Psoas muscle (tissue), 8 donors: ENCODE measurements at regions of chr15 and their contacts with region 1.

Region 1: DNA sequence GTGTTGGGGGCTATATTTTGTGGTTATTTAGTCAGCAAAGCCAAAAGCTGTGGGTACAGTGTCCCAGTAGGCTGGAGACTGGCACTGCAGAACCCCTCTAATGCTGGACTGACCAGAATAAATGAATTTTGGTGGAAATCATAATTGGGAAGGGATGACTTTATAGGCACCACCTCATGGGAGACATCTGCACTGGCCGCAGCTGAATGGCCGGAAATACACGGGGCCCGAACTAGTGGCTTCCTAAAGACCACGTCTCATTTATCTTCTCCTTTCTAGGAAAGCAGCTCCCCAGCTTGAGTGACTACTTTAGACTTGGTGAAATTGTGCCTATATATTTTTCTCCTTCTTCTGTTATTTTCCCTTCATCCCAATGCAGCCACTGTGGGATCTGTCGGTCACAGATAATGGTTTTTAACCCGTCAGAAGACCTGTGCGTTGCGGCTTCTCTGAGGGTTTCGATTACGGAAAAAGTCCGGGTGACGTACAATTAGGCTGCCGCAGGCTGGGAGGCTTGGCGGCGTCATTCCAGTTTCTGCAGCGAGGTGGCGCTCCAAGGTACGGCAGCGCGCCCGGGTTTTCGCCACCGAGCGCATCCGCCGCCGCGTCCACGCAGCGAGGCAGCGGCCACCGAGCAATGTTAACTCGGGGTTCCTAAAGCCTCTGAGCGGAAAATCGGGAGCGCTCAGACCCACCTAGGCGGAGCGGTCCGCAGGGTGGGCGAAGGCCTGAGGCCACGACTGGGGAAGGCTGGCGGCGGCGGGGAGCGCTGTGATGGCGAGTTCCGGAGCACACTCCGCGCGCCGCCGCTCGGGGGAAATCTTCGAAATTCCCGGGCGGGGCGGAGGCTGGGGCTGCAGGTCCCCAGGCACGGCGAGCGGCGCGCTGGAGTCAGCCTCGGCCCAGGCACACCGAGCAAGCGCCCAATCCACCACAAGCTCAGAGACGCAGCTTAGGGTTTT is 26.3 kb downstream of the NR2F2 start:
- DNase-seq: peak; percentile 80 to 87
- ATAC-seq: peak; percentile 70 to 88 (median 82)
- H3K4me3 ChIP-seq: peak overlapping the region; percentile 68
- H3K27ac ChIP-seq: peak overlapping the region; percentile 19
- H3K4me1 ChIP-seq: peaks cover 3% of the 10 kb centered on the region
- H3K27me3 ChIP-seq: peaks cover 4 to 78% (median 28%) of the 10 kb centered on the region in 3 donors
- CTCF ChIP-seq: peak; percentile 99

Region 2: GRCh38 chr15:96409215-96410138 is 52.7 kb after region 1 on chr15:
- intact Hi-C with region 1: loop called in 1 of 2 experiments (anchors 5 kb)
- DNase-seq: no peak
- ATAC-seq: peak in 1 of 4 donors; percentile 24
- H3K4me3 ChIP-seq: peak overlapping the region; percentile 60
- H3K27ac ChIP-seq: no peak overlapping the region
- H3K4me1 ChIP-seq: peaks cover 6% of the 10 kb centered on the region
- H3K27me3 ChIP-seq: peaks cover 14 to 92% (median 27%) of the 10 kb centered on the region in 3 donors
- CTCF ChIP-seq: no peak

Region 3: DNA sequence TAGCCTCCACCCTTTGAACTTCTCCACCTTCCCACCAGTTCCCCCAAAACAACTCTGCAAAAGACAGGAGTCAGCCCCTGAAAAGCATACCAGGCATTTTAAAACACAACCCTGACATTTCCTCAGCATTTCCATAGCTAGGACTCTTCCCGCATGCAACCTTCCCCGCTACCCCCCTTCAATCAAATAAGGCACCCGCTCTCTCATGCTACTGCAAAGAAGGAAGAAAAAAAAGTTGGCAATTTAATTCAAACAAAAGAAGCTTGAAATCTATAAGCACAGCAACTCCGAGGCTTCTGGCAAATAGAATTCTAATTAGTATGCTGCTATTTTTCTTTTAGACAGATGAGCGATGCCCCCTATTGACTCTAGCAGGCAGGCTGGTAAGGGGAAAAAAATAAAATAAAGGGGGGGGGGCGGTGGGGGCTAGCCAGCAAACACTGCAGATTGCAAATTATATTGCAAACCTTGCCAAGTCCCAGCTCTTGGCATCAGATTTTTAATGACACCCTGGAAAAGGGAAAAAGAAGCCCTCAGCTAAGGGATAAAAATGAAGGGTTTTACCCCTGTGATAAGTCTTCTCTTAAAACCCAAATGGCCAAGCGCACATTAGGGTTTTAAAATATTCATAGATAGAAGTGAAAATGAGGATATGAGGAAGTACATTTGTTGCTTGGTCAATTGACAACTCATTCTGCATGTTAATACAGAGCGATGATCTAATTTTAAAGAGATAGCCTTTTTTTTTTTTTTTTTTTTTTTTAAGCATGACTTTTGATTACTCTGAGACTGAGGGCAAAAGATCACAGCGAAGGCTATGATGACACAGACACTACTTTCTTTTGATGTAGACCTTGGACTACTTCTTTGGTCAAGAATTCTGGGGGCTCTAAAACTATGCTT is 229.0 kb after region 1 on chr15:
- intact Hi-C with region 1: loop called (anchors 2 to 5 kb)
- DNase-seq: no peak
- ATAC-seq: no peak
- H3K4me3 ChIP-seq: no peak overlapping the region
- H3K27ac ChIP-seq: no peak overlapping the region
- H3K4me1 ChIP-seq: no peaks in the 10 kb centered on the region
- H3K27me3 ChIP-seq: no peaks in the 10 kb centered on the region
- CTCF ChIP-seq: peak; percentile 22

Region 4: GRCh38 chr15:96701443-96701842 is 344.7 kb after region 1 on chr15:
- intact Hi-C with region 1: loop called in 1 of 2 experiments (anchors 10 kb)
- DNase-seq: no peak
- ATAC-seq: no peak
- H3K4me3 ChIP-seq: no peak overlapping the region
- H3K27ac ChIP-seq: no peak overlapping the region
- H3K4me1 ChIP-seq: no peaks in the 10 kb centered on the region
- H3K27me3 ChIP-seq: peaks cover 0 to 17% (median 2%) of the 10 kb centered on the region in 3 donors
- CTCF ChIP-seq: no peak

Region 5: DNA sequence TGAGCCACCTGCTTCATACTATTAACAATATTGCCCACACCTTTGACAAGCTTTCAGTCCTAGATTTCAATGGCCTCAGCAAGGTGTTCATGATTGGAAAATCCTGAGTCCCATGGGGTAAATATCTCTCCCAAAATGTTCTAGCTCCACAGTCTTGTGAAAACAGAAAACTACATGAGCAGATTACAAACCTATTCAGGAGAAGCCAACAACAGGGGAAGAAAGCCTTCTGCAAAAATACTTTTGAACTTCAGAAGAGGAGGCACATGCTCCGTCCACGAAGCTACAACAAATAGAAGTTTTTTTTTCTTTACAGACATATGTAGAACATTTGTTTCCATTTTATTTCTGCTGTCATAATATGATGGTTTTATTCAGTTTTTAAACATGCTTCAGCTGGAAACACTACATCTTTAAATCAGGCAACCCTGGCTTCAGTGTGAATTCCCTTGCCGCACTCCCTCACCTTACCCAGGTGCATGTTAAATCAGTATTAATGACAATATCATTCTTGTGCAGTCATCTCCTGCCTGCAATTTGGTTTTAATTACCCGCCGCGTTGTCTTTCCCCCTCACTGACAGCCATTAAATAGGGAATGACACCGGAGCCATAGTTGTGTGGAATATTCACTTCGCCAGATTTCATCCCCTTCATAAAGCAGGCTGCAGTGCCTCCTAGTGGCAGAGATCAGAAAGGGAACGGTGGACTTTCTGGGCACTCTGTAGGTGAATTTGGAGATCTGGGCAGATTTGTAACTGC is 878.3 kb after region 1 on chr15:
- intact Hi-C with region 1: loop called (anchors 10 kb)
- DNase-seq: no peak
- ATAC-seq: peak in 3 of 4 donors; percentile 30 to 60 (median 38)
- H3K4me3 ChIP-seq: no peak overlapping the region
- H3K27ac ChIP-seq: no peak overlapping the region
- H3K4me1 ChIP-seq: no peaks in the 10 kb centered on the region
- H3K27me3 ChIP-seq: peaks cover 0 to 5% (median 0%) of the 10 kb centered on the region in 3 donors
- CTCF ChIP-seq: peak; percentile 75

Region 6: DNA sequence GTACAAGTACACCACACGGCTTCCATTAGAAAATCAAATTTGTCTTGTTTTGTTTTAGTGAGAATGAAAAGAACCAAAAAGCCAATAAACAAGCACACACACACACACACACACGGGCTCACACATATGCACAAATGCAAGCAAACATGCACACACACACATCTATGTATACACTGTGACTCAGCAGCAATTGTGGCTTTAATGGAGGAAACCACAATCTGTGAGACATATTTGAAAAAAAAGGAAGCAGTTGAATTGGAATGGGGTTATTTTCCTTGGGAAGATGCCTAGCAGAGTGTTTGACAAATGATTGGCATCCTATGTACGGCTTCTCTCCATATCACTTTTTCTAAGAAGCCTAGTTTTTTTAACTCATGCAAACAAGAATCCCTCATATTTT is 1402.6 kb after region 1 on chr15:
- intact Hi-C with region 1: loop called (anchors 10 kb)
- DNase-seq: no peak
- ATAC-seq: no peak
- H3K4me3 ChIP-seq: no peak overlapping the region
- H3K27ac ChIP-seq: no peak overlapping the region
- H3K4me1 ChIP-seq: no peaks in the 10 kb centered on the region
- H3K27me3 ChIP-seq: peaks cover 0 to 2% (median 0%) of the 10 kb centered on the region in 3 donors
- CTCF ChIP-seq: no peak